ENCODE measurements at regions of chr11 and their contacts with region 1.

Region 1: DNA sequence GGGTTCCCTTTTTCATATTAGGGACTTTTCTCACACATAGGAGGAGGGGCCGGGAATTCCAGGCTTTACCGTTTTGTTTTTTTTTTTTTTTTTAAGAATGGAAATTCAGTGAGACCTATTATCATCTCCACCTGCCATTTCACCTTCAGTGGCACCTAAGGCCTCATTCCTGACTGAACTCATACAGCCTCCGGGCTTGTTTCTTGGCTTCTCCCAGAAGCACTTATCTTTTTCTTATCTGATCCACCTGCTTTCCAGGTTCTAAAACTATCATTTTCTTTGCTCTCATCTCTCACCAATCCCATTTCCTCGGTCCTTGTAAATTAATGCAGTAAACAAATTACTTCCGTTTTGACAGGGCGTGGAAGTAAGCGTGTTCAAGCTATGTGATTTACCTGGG is 264.5 kb upstream of the CNTN5 start:
- DNase-seq: no peak
- H3K4me3 ChIP-seq: no peak overlapping the region
- H3K27ac ChIP-seq: no peak overlapping the region
- H3K27me3 ChIP-seq: no peaks in the 10 kb centered on the region
- CTCF ChIP-seq: no peak

Region 2: GRCh38 chr11:98545544-98546175 is 210.6 kb before region 1 on chr11:
- intact Hi-C with region 1: no loop called
- DNase-seq: no peak
- H3K4me3 ChIP-seq: no peak overlapping the region
- H3K27ac ChIP-seq: no peak overlapping the region
- H3K27me3 ChIP-seq: no peaks in the 10 kb centered on the region
- CTCF ChIP-seq: no peak

Region 3: GRCh38 chr11:98766903-98767302 is 10.6 kb after region 1 on chr11:
- intact Hi-C with region 1: loop called in 1 of 2 experiments (anchors 1 kb)
- DNase-seq: no peak
- H3K4me3 ChIP-seq: no peak overlapping the region
- H3K27ac ChIP-seq: no peak overlapping the region
- H3K27me3 ChIP-seq: peaks cover 0 to 3% (median 0%) of the 10 kb centered on the region in 45 donors
- CTCF ChIP-seq: no peak

Measured in dorsolateral prefrontal cortex (tissue), 120 donors.